ENCODE measurements at regions of chr2 and their contacts with region 1.

Region 1: DNA sequence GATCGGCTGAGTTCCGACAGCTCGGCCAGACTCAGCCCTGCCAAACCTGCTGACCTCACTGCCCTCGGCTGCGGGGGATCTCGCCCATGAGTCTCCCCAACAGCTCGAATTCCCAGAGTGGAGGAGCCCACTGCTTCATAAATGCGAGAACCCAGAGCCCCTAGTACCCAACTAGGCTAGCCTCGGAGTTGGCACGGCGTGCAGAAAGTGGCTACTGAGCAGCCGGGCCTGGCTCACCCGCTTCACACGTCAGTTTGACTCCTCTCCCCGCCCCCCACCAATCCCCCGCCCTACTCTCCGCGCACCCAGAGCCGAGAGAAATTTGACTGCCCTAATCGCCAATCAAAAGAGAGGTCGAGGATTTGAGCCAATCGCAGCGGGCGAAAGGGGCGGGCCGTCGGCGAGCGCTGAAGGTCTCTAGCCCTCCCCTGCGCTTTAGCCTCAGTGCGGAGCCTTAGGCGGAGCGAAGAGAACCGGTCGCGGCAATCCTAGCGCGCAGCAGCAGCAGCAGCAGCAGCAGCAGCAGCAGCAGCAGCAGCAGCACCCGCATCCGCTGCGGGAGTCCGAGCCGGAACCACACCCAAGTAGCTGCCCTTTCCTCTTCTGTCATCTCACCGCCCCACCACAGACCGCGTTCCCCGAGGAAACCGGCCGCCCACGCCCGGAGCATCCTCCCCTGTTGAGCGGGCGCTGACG is at the start of gene GLS:
- DNase-seq: peak; percentile 97
- H3K4me3 ChIP-seq: peak within 1 kb of the TSS; percentile 62 to 91 (median 71)
- H3K27ac ChIP-seq: peak within 1 kb of the TSS; percentile 95 to 100 (median 99)
- H3K4me1 ChIP-seq: peaks cover 12 to 28% of the 10 kb centered on the region in 2 donors
- H3K27me3 ChIP-seq: no peaks in the 10 kb centered on the region
- CTCF ChIP-seq: no peak
- POLR2A ChIP-seq: peak; percentile 97 to 99
- total RNA-seq, gene GLS: 175 to 274 (median 197) TPM

Region 2: GRCh38 chr2:190959911-190960788 is 79.6 kb after region 1 on chr2:
- intact Hi-C with region 1: loop called (anchors 10 kb)
- DNase-seq: no peak
- H3K4me3 ChIP-seq: no peak overlapping the region
- H3K27ac ChIP-seq: no peak overlapping the region
- H3K4me1 ChIP-seq: peaks cover 0 to 6% of the 10 kb centered on the region in 2 donors
- H3K27me3 ChIP-seq: no peaks in the 10 kb centered on the region
- CTCF ChIP-seq: no peak
- POLR2A ChIP-seq: no peak

Region 3: GRCh38 chr2:191013932-191014652 is 133.6 kb after region 1 on chr2 and contains the start of gene STAT1:
- intact Hi-C with region 1: loop called (anchors 5 kb)
- DNase-seq: peak; percentile 93
- H3K4me3 ChIP-seq: peak within 1 kb of the TSS; percentile 70 to 93 (median 80)
- H3K27ac ChIP-seq: peak within 1 kb of the TSS; percentile 88 to 97 (median 93)
- H3K4me1 ChIP-seq: peaks cover 17 to 31% of the 10 kb centered on the region in 2 donors
- H3K27me3 ChIP-seq: no peaks in the 10 kb centered on the region
- CTCF ChIP-seq: peak in 1 of 6 experiments; percentile 33
- POLR2A ChIP-seq: peak in 1 of 2 donors; percentile 91
- total RNA-seq, gene STAT1: 38.0 to 87.7 (median 61.3) TPM

Region 4: DNA sequence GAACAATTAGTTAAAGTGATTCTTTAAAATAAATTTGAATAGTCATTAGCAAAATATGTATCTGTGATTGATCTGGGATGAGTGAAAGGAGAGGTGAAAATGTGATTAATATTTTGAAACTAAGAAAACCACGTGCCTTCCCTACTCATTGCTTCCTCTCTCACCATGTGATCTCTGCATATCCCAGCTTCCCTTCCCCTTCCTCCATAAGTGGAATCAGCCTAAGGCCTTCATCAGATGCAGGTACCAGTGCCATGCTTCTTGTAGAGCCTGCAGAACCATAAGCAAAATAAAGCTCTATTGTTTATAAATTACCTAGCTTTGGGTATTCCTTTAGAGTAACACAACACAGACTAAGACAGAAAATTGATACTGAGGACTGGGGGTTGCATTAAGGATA is 144.6 kb after region 1 on chr2:
- intact Hi-C with region 1: no loop called
- DNase-seq: no peak
- H3K4me3 ChIP-seq: no peak overlapping the region
- H3K27ac ChIP-seq: no peak overlapping the region
- H3K4me1 ChIP-seq: peaks cover 0 to 6% of the 10 kb centered on the region in 2 donors
- H3K27me3 ChIP-seq: no peaks in the 10 kb centered on the region
- CTCF ChIP-seq: no peak
- POLR2A ChIP-seq: no peak

Region 5: GRCh38 chr2:191070276-191070675 is 189.8 kb after region 1 on chr2:
- intact Hi-C with region 1: no loop called
- DNase-seq: no peak
- H3K4me3 ChIP-seq: no peak overlapping the region
- H3K27ac ChIP-seq: no peak overlapping the region
- H3K4me1 ChIP-seq: no peaks in the 10 kb centered on the region
- H3K27me3 ChIP-seq: no peaks in the 10 kb centered on the region
- CTCF ChIP-seq: no peak
- POLR2A ChIP-seq: no peak